ENCODE measurements at regions of chr11 and their contacts with region 1.

Region 1: DNA sequence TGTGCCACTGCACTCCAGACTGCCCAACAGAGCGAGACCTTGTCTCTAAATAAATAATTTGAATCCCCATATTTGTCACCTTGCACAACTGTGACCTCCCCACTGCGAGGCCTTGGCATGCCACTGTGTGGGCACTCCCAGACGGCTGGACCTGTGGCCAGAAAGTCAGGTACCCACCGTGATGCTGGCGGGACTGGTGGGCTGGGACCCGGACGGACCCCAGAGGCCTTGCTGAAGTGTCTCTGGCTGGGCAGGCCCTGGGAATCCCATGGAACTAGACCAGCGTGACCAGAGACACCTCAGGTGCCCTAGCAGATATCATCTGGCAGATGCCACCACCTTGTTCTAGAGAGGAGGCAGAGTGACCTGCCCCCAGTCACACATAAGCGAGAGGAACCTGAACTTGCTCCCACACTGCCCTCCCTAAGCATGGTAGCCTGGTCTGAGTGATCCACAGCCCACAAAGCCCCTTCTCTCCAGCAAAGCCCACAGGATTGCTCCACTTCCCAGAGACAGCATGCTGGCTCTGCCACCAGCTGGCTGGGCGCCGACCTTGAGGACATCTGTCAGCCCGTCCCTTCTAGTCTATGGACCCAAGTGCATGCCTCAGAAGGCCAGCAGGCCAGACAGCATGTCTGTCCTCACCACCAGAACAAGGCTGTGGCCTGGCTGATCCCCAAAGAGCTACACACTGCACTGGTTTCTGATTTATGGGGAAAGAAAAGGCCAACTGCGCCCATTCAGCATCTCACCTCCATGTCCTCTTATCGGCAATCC is 9.5 kb downstream of the MACROD1 start:
- DNase-seq: no peak
- H3K4me3 ChIP-seq: no peak overlapping the region
- H3K27ac ChIP-seq: no peak overlapping the region
- H3K4me1 ChIP-seq: peaks cover 9% of the 10 kb centered on the region
- H3K27me3 ChIP-seq: no peaks in the 10 kb centered on the region
- CTCF ChIP-seq: no peak
- POLR2A ChIP-seq: no peak

Region 2: DNA sequence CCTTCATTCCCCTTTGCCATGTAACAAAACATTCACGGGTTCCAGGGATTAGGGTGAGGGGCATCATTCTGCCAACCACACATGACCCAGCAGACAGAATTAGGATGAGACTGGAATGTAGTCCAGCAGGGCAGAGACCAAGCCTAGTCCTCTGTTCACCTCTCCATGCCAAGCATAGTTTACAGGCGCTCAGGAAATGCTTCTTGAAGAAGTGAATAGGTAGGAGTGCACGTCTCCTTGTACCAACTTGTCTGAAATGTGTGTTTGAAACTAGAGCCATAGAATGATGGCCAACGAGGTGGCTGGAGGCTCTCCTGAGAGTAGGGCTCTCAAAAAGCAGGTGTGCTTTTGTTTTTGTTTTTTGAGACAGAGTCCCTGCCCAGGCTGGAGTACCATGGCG is 335.0 kb before region 1 on chr11:
- intact Hi-C with region 1: loop called (anchors 5 kb)
- DNase-seq: no peak
- H3K4me3 ChIP-seq: no peak overlapping the region
- H3K27ac ChIP-seq: no peak overlapping the region
- H3K4me1 ChIP-seq: peaks cover 4% of the 10 kb centered on the region
- H3K27me3 ChIP-seq: no peaks in the 10 kb centered on the region
- CTCF ChIP-seq: no peak
- POLR2A ChIP-seq: no peak

Region 3: DNA sequence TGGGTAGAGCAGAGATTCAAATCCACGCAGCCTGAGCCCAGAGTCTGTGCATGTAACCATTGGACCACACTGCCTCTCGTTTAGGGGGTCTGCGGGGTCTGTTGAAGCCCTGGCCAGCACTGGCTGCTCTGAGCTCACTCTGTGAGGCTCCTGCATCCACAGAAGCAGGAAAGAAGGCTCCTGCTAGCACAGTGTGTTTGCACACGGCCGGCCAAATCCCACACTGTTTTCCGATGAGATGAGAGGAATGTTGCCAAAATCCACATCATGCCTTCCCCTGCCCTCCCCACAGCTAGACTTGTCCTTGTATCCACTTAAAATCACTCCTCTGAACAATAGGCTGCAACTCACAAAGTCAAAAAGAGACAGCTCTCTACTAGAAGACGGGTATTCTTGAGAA is 424.0 kb after region 1 on chr11:
- intact Hi-C with region 1: no loop called
- DNase-seq: no peak
- H3K4me3 ChIP-seq: no peak overlapping the region
- H3K27ac ChIP-seq: no peak overlapping the region
- H3K4me1 ChIP-seq: no peaks in the 10 kb centered on the region
- H3K27me3 ChIP-seq: no peaks in the 10 kb centered on the region
- CTCF ChIP-seq: no peak
- POLR2A ChIP-seq: no peak

Region 4: DNA sequence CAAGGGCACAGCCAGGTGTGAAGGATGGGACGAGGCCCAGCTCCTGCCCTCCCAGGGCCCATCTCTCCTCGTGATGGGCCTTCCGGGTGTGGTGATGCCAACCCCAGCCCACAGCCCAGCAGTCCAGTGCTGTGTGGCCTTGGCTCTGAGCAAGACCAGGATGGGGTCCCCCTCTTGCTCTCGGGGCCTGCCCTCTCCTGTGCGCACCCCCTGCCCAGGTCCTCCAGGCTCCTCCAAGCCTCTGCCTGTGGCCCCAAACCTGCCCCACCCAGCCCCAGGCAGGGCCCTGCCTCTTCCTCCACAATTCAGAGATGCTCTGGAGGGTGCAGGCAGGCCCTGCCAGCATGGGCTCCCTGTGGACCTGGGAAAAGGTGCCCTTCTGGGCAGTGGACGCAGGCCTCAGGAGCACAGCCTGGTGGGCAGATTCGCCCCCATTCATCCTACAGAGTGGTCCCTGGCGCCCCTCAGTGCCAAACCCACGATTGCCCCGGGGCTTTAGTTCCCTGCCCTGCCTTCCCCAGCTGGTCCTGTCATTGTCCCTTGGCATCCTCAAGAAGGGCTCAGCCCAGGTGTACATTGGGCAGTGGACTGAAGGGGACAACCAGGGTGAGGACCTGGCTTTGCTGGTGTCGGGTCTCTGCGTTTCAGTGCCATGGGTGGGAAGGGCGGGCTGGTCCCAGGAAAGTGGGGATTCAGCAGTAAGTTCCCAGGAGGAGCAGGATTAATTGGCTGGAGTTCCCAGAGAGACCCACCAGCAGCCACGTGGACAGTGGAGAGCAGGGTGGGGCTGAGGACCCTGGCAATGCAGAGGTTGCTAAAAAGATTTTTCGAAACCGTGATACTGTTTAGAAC is 1825.8 kb after region 1 on chr11:
- intact Hi-C with region 1: no loop called
- DNase-seq: peak in 1 of 2 donors; percentile 74
- H3K4me3 ChIP-seq: no peak overlapping the region
- H3K27ac ChIP-seq: no peak overlapping the region
- H3K4me1 ChIP-seq: no peaks in the 10 kb centered on the region
- H3K27me3 ChIP-seq: no peaks in the 10 kb centered on the region
- CTCF ChIP-seq: no peak
- POLR2A ChIP-seq: no peak

Measured in vagina (tissue), 2 donors.